ENCODE measurements at regions of chr11 and their contacts with region 1.

Region 1: GRCh38 chr11:14454861-14455632 is 44.6 kb downstream of the COPB1 start:
- DNase-seq: no peak
- H3K4me3 ChIP-seq: no peak overlapping the region
- H3K27ac ChIP-seq: no peak overlapping the region
- H3K27me3 ChIP-seq: no peaks in the 10 kb centered on the region
- CTCF ChIP-seq: peak; percentile 70

Region 2: DNA sequence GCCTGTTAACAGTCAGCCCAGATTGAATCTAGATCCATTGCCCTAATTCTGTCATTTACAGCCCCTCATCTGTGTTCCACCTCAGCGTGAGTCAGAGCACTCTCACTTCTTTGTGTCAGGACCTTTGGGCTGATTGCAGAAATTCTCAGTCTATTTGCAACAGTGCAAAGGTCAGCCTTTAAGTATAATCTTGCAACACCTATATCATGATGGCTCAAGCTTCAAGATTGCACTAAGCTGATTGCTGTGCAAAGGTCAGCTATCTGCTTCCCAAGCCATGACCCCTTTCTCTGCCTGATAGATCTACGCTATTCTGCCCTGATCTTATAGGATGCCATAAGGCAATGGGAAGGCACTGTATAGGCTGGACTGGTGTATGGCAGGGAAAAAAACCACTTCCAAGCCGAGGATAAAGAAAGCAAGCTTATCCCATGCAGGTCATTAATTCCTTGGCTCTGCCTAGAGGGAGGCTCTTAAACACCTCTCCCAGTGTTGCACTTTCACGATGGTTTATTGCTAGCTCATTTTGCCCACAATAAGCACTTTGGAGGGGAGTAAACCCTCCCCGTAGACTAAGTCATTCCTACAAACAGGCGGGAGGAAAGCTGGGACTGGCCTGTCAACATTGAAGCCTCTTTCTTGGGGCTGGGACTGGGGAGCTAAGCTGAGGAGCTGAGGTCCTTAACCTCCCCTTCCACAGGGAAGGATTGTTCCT is 196.7 kb before region 1 on chr11:
- CTCF ChIA-PET with region 1: interaction called, 27 read pairs
- POLR2A ChIA-PET with region 1: no interaction called
- DNase-seq: no peak
- H3K4me3 ChIP-seq: no peak overlapping the region
- H3K27ac ChIP-seq: no peak overlapping the region
- H3K27me3 ChIP-seq: peaks cover 19% of the 10 kb centered on the region
- CTCF ChIP-seq: no peak

Region 3: DNA sequence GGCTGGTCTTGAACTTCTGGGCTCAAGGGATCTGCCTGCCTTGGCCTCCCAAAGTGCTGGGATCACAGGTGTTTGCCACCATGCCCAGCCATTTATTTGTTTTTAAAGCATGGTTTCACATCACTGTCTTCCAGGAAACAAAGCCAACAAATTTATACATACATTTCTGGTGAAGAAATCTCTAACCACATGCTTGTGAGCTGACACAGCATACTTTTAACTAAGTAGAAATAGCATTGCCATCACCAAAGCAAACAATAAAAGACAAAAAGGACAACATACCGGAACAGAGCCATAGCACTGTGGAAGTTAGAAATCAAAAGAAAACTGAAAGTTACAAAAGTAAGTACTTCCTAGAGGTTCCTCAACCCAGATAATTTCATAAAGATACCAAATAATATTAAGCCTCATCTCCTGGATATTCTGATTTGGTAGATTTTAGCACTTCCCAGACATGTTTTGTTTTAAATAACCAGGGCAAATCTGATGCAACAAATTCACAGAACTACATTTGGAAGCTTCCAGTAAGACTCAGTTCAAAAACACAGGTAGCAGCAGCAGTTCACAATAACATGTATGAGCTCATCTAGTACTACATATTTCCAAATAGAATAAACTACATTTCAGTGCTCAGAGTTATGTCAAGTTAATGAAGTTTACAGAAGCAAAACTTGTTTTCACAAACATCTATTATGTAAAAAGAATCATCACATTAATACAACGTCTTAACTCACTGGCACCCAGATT is 166.7 kb before region 1 on chr11:
- CTCF ChIA-PET with region 1: interaction called, 19 read pairs
- POLR2A ChIA-PET with region 1: no interaction called
- DNase-seq: peak; percentile 74
- H3K4me3 ChIP-seq: no peak overlapping the region
- H3K27ac ChIP-seq: peak overlapping the region; percentile 88
- H3K27me3 ChIP-seq: no peaks in the 10 kb centered on the region
- CTCF ChIP-seq: no peak

Region 4: DNA sequence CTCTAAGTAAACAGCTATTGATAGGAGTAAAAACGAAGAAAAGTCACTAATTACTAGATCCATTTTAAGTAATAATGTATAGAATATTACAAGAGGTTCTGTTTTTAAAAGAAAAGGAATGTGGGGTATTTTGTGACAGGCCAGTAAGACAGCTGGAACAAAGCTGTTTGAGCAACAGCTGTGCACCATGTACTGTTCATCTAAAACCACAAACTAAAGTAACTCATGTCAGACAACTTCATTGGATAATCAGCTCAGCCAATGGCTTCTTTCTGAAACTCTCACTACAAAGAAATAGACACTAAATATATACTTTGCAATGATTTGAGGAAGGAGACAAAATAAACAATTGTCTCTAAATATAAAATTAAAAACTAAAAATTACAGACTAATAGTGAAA is 112.1 kb before region 1 on chr11:
- CTCF ChIA-PET with region 1: interaction called, 25 read pairs
- POLR2A ChIA-PET with region 1: no interaction called
- DNase-seq: peak; percentile 48
- H3K4me3 ChIP-seq: no peak overlapping the region
- H3K27ac ChIP-seq: no peak overlapping the region
- H3K27me3 ChIP-seq: no peaks in the 10 kb centered on the region
- CTCF ChIP-seq: no peak

Region 5: DNA sequence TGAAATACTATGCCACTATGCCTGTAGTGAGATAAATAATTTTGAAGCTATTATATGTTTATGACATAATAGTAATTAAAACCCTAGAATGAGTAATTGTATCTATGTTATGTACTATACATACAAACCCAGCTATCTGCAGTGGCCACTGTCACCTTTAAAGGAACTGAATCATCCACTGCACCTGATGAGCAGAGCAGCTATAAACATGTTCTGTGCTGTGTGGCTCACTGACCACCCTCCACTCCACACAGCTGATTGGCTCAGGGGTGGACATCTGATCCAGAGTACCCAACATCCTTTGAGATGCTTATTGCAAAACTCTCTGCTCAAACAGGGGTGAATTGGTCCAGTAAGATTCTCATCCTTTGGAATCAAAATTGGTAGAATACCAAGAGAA is 76.9 kb before region 1 on chr11:
- CTCF ChIA-PET with region 1: interaction called, 14 read pairs
- POLR2A ChIA-PET with region 1: interaction called, 7 read pairs
- DNase-seq: no peak
- H3K4me3 ChIP-seq: no peak overlapping the region
- H3K27ac ChIP-seq: no peak overlapping the region
- H3K27me3 ChIP-seq: no peaks in the 10 kb centered on the region
- CTCF ChIP-seq: no peak

Region 6: DNA sequence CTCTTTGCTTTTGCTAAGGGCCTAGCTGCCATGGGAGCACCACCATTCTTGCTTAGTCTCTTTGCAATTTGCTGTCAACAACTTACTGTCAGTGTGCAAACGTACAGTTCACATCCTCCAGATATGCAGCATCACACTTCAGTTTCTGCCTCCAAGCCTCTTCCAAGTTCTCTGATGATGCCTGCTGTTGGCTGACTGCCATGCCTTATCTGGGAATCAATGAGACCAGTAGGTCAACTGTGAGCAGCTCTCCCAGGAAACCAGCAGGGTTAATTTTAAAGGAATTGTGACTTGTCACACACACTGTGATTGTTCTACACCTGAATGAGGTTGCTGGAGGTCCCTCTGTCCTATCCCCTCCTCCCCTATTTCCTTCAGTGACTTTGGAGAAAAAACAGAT is 11.4 kb before region 1 on chr11:
- CTCF ChIA-PET with region 1: interaction called, 23 read pairs
- POLR2A ChIA-PET with region 1: no interaction called
- DNase-seq: no peak
- H3K4me3 ChIP-seq: no peak overlapping the region
- H3K27ac ChIP-seq: no peak overlapping the region
- H3K27me3 ChIP-seq: no peaks in the 10 kb centered on the region
- CTCF ChIP-seq: no peak

Region 7: DNA sequence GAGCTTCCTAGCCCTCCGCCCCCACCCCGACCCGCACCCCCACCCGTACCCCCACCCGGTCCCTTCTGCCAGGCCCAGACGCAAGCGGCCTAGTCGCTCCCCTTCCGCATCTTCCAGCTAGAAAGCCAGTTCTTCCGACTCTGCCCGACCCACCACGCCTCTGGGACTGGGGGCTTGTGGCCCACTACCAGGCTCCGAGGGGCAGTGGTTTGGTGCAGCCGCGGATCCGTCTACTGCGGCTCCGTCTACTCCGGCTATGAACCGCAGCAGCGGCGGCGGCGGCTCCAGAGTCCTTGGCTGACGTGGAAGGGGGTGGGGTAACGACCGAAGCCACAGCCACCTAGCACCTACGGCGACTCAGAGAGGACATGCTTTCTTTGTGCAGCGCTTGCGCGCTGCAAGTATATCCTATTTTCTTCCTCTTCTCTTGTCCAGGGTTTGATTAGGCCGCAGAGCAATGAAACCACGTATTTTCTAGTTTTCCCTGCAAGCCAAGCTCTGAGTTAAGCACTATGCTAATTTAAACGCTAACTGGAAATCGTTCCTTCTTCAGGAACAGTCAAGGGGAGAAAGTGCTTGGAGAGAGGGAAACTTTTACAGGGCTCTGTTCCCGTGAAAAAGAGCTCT is 44.6 kb after region 1 on chr11 and contains the start of gene COPB1:
- CTCF ChIA-PET with region 1: interaction called, 20 read pairs
- POLR2A ChIA-PET with region 1: no interaction called
- DNase-seq: peak; percentile 81
- H3K4me3 ChIP-seq: peak within 1 kb of the TSS; percentile 76
- H3K27ac ChIP-seq: peak within 1 kb of the TSS; percentile 84
- H3K27me3 ChIP-seq: no peaks in the 10 kb centered on the region
- CTCF ChIP-seq: no peak
- polyA plus RNA-seq, gene COPB1: 212 and 285 TPM in 2 replicates

Measured in AG04450 (cell line).